Panc1 (cell line): ENCODE measurements at regions of chr6 and their contacts with region 1.

Region 1: DNA sequence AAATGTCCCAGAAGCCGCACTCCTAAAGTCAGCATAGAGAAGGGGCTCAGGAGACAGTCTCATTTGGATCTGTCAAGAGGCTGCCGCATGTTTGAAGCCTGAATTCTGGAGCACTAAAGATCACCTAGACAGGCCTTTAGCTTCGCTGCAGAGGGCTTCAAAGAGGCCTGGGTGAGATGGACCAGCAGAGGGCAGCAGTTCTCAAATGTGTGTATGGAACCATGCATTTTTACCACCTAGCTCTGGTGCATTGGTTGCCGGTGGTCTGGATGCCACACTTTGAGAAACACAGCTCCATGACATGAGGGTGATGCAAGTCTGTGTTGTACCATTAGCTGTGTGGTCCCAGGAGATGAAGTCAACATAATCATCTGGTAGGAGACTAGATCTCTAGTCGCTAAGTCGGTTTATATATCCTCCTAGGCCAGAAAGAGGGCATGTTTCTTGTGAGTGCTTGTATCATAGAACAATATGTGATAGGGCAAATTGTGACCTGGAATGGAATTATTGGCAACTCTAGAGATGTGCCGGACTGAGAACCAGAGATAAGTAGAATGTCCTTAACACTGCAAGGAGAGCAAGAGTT is 64.8 kb downstream of the KIAA0319 start:
- DNase-seq: peak; percentile 58
- ATAC-seq: peak; percentile 97
- H3K4me3 ChIP-seq: no peak overlapping the region
- H3K27ac ChIP-seq: no peak overlapping the region
- H3K4me1 ChIP-seq: no peaks in the 10 kb centered on the region
- H3K27me3 ChIP-seq: no peaks in the 10 kb centered on the region
- CTCF ChIP-seq: peak; percentile 89

Region 2: GRCh38 chr6:24646782-24647181 is 65.6 kb after region 1 on chr6:
- CTCF ChIA-PET with region 1: interaction called, 11 read pairs
- POLR2A ChIA-PET with region 1: no interaction called
- in situ Hi-C with region 1: no loop called
- intact Hi-C with region 1: no loop called
- DNase-seq: no peak
- ATAC-seq: no peak
- H3K4me3 ChIP-seq: peak overlapping the region in 1 of 2 experiments; percentile 58; a peak in 2 of 4 replicates
- H3K27ac ChIP-seq: no peak overlapping the region
- H3K4me1 ChIP-seq: peaks cover 6% of the 10 kb centered on the region
- H3K27me3 ChIP-seq: no peaks in the 10 kb centered on the region
- CTCF ChIP-seq: no peak

Region 3: GRCh38 chr6:24689964-24690363 is 108.8 kb after region 1 on chr6:
- CTCF ChIA-PET with region 1: interaction called, 3 read pairs
- POLR2A ChIA-PET with region 1: no interaction called
- in situ Hi-C with region 1: no loop called
- intact Hi-C with region 1: loop called (anchors 1 kb)
- DNase-seq: no peak
- ATAC-seq: no peak
- H3K4me3 ChIP-seq: no peak overlapping the region
- H3K27ac ChIP-seq: no peak overlapping the region
- H3K4me1 ChIP-seq: peaks cover 3% of the 10 kb centered on the region; the same call in 1 of the 2 replicates
- H3K27me3 ChIP-seq: no peaks in the 10 kb centered on the region
- CTCF ChIP-seq: no peak

Region 4: DNA sequence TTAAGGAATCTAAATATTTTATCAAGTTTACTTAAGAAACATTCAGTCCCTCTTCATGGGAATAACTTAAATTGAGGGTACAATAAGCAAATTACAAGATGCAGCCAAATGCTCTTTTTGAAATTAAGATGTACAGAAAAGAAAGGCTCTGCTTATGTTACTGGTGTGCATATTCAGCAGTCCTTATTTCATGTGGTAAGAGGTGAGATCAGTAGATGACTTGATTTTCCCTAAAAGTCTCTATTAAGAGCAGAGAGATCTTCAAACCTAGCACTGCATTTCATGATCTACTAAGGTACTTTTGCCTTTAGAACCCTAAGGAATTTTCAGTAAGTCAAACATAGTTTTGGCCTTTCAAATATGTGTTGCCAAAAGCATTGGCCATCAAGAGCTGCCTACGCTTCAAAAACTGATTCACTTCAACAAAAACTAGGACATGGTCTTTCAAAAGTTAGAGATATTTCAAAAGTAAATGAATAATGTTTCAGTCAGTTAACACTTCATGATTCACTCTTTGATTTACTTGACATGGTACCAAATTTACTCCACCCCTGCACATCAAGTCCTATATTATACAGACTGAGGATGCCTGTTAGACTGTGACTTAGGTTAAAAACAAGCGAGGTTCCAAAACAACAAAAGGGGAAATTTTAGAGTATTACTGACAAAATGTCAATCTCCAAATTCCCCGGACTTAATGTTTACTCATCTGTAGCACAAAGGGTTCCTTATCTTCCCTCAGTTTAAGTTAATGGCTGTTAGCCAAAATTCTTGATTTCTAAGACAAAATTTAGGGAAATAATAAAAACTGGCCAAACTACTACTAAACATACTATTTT is 118.6 kb after region 1 on chr6:
- CTCF ChIA-PET with region 1: interaction called, 3 read pairs
- POLR2A ChIA-PET with region 1: interaction called, 3 read pairs
- in situ Hi-C with region 1: no loop called
- intact Hi-C with region 1: loop called (anchors 1 kb)
- DNase-seq: no peak
- ATAC-seq: no peak
- H3K4me3 ChIP-seq: no peak overlapping the region
- H3K27ac ChIP-seq: no peak overlapping the region
- H3K4me1 ChIP-seq: no peaks in the 10 kb centered on the region
- H3K27me3 ChIP-seq: no peaks in the 10 kb centered on the region
- CTCF ChIP-seq: no peak

Region 5: GRCh38 chr6:24766680-24767462 is 185.7 kb after region 1 on chr6:
- CTCF ChIA-PET with region 1: interaction called, 4 read pairs
- POLR2A ChIA-PET with region 1: no interaction called
- in situ Hi-C with region 1: no loop called
- intact Hi-C with region 1: loop called (anchors 5 kb)
- DNase-seq: no peak
- ATAC-seq: peak; percentile 74; the same call in 1 of the 2 replicates
- H3K4me3 ChIP-seq: no peak overlapping the region
- H3K27ac ChIP-seq: no peak overlapping the region
- H3K4me1 ChIP-seq: no peaks in the 10 kb centered on the region
- H3K27me3 ChIP-seq: no peaks in the 10 kb centered on the region
- CTCF ChIP-seq: no peak; the same call in 1 of the 2 replicates

Region 6: DNA sequence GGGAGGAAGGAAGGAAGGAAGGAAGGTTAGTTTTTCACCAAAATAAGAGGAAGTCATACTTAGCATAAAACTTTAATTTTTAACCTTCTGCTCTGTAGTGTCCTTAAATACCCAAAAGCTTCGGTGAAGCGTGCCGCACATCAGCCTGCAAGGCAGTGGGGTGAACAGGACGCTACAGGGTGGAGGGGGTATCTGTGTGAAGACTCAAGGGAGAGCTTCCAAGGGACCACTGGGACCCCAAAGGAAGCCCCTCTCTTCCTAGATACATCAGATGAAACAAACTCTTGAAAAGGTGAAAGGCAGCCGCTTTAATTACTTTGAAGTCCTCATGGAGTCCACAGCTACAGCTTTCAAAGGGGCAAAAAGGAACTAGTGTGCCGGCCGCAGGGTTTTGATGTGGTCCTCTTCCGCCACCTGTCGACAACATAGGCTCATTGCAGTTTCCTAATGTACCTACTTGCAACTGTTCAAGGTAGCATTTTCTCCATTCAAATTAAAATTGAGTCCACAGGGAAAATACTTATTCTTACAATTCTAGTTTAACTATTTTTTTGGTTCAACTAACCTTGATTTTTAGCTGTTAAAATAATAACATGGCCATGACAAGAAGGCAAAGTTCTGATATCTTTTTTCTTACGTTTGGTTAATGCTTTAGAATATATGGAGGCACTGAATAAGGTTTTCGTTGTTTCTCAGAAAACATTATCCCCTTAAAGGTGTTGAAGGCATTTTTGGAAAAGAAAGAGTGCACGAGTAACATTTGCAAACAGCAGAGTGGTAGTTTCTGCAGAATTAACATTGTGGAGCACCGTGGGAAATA is 489.6 kb after region 1 on chr6:
- CTCF ChIA-PET with region 1: no interaction called
- POLR2A ChIA-PET with region 1: no interaction called
- in situ Hi-C with region 1: no loop called
- intact Hi-C with region 1: loop called (anchors 10 kb)
- DNase-seq: peak; percentile 52
- ATAC-seq: peak; percentile 94
- H3K4me3 ChIP-seq: no peak overlapping the region
- H3K27ac ChIP-seq: no peak overlapping the region
- H3K4me1 ChIP-seq: no peaks in the 10 kb centered on the region
- H3K27me3 ChIP-seq: 0 out of 2 replicates have a peak, but pooled peaks cover 2% of the 10 kb centered on the region
- CTCF ChIP-seq: peak; percentile 89